Naive thymus-derived CD4-positive, alpha-beta T cell (primary cell): ENCODE measurements at regions of chr18 and their contacts with region 1.

Region 1: GRCh38 chr18:12408247-12408869 is 629 bp downstream of the PRELID3A start:
- DNase-seq: no peak
- ATAC-seq: no peak
- H3K4me3 ChIP-seq: no peak overlapping the region
- H3K4me3 Mint-ChIP-seq: peak overlapping the region; percentile 42 to 88 (median 62)
- H3K27ac ChIP-seq: no peak overlapping the region
- H3K27ac Mint-ChIP-seq: peak overlapping the region in 4 of 9 donors; percentile 18 to 65 (median 40)
- H3K4me1 ChIP-seq: peaks cover 9 to 13% of the 10 kb centered on the region in 2 donors
- H3K4me1 Mint-ChIP-seq: peaks cover 10 to 30% (median 25%) of the 10 kb centered on the region in 7 donors
- H3K27me3 ChIP-seq: no peaks in the 10 kb centered on the region
- H3K27me3 Mint-ChIP-seq: peaks cover 7 to 41% (median 25%) of the 10 kb centered on the region in 5 donors

Region 2: DNA sequence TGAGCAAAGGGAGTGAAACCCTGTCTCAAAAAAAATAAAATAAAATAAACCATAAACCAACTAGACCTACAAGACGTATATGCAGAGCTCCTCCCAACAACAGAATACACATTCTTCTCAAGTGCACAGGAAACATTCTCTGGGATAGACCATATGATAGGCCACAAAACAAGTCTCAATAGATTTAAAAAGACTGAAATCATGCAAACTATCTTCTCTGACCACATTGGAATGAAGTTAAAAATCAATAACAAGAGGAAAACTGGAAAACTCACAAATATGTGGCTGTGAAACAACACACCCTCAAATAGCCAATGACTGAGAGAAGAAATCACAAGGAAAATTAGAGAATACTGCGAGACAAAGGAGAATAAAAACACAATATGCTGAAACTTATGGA is 24.1 kb before region 1 on chr18:
- CTCF ChIA-PET with region 1: no interaction called
- POLR2A ChIA-PET with region 1: no interaction called
- intact Hi-C with region 1: no loop called
- DNase-seq: no peak
- ATAC-seq: no peak
- H3K4me3 ChIP-seq: no peak overlapping the region
- H3K4me3 Mint-ChIP-seq: no peak overlapping the region
- H3K27ac ChIP-seq: no peak overlapping the region
- H3K27ac Mint-ChIP-seq: no peak overlapping the region
- H3K4me1 ChIP-seq: no peaks in the 10 kb centered on the region
- H3K4me1 Mint-ChIP-seq: no peaks in the 10 kb centered on the region
- H3K27me3 ChIP-seq: no peaks in the 10 kb centered on the region
- H3K27me3 Mint-ChIP-seq: peaks cover 0 to 12% (median 0%) of the 10 kb centered on the region in 5 donors

Region 3: GRCh38 chr18:12420831-12421421 is 12.6 kb after region 1 on chr18:
- CTCF ChIA-PET with region 1: no interaction called
- POLR2A ChIA-PET with region 1: no interaction called
- intact Hi-C with region 1: loop called in 1 of 2 experiments (anchors 1 kb)
- DNase-seq: no peak
- ATAC-seq: no peak
- H3K4me3 ChIP-seq: no peak overlapping the region
- H3K4me3 Mint-ChIP-seq: peak overlapping the region; percentile 34 to 94 (median 76)
- H3K27ac ChIP-seq: no peak overlapping the region
- H3K27ac Mint-ChIP-seq: peak overlapping the region in 1 of 9 donors; percentile 74
- H3K4me1 ChIP-seq: no peaks in the 10 kb centered on the region
- H3K4me1 Mint-ChIP-seq: peaks cover 4 to 13% (median 8%) of the 10 kb centered on the region in 7 donors
- H3K27me3 ChIP-seq: peaks cover 0 to 3% of the 10 kb centered on the region in 2 donors
- H3K27me3 Mint-ChIP-seq: peaks cover 3 to 18% (median 16%) of the 10 kb centered on the region in 5 donors